Activated CD4-positive, alpha-beta T cell treated with anti-CD3 and anti-CD28 coated beads for 36 hours (primary cell): ENCODE measurements at regions of chr2 and their contacts with region 1.

Region 1: GRCh38 chr2:232315049-232315922 is 63.3 kb upstream of the ALPP start:
- DNase-seq: peak; percentile 86
- ATAC-seq: peak; percentile 90
- H3K4me3 Mint-ChIP-seq: peak overlapping the region; percentile 42
- H3K27ac Mint-ChIP-seq: peak overlapping the region; percentile 97
- H3K4me1 Mint-ChIP-seq: peaks cover 87% of the 10 kb centered on the region
- H3K27me3 Mint-ChIP-seq: no peaks in the 10 kb centered on the region

Region 2: GRCh38 chr2:232026910-232027309 is 288.4 kb before region 1 on chr2:
- CTCF ChIA-PET with region 1: no interaction called
- POLR2A ChIA-PET with region 1: no interaction called
- intact Hi-C with region 1: loop called in 1 of 2 experiments (anchors 5 kb)
- DNase-seq: no peak
- ATAC-seq: peak; percentile 95
- H3K4me3 Mint-ChIP-seq: no peak overlapping the region
- H3K27ac Mint-ChIP-seq: peak overlapping the region; percentile 48
- H3K4me1 Mint-ChIP-seq: peaks cover 29% of the 10 kb centered on the region
- H3K27me3 Mint-ChIP-seq: no peaks in the 10 kb centered on the region

Region 3: DNA sequence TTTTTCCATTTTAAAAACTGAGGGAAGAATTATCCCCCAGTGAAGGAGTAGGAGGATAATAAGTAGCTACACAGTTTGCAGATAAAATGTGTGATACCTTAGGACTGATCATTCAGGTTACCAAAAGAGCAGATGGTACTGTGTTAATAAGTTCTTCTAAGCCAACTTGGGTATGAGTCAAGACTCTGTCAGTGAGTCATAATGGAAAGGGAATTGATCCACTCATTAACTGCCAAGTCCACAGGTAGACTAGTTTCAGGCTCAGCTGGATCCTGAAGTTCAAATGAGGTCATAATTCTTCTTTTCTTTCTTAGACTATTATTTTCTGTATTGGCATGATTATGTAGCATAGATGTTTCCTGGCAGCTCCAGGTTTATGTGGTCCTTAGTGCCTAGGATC is 79.1 kb before region 1 on chr2:
- CTCF ChIA-PET with region 1: interaction called, 5 read pairs
- POLR2A ChIA-PET with region 1: no interaction called
- intact Hi-C with region 1: loop called (anchors 1 to 5 kb)
- DNase-seq: no peak
- ATAC-seq: peak; percentile 69
- H3K4me3 Mint-ChIP-seq: no peak overlapping the region
- H3K27ac Mint-ChIP-seq: peak overlapping the region; percentile 58
- H3K4me1 Mint-ChIP-seq: peaks cover 64% of the 10 kb centered on the region
- H3K27me3 Mint-ChIP-seq: no peaks in the 10 kb centered on the region

Region 4: GRCh38 chr2:232260075-232260474 is 55.2 kb before region 1 on chr2:
- CTCF ChIA-PET with region 1: no interaction called
- POLR2A ChIA-PET with region 1: no interaction called
- intact Hi-C with region 1: no loop called
- DNase-seq: no peak
- ATAC-seq: no peak
- H3K4me3 Mint-ChIP-seq: no peak overlapping the region
- H3K27ac Mint-ChIP-seq: no peak overlapping the region
- H3K4me1 Mint-ChIP-seq: no peaks in the 10 kb centered on the region
- H3K27me3 Mint-ChIP-seq: no peaks in the 10 kb centered on the region

Region 5: DNA sequence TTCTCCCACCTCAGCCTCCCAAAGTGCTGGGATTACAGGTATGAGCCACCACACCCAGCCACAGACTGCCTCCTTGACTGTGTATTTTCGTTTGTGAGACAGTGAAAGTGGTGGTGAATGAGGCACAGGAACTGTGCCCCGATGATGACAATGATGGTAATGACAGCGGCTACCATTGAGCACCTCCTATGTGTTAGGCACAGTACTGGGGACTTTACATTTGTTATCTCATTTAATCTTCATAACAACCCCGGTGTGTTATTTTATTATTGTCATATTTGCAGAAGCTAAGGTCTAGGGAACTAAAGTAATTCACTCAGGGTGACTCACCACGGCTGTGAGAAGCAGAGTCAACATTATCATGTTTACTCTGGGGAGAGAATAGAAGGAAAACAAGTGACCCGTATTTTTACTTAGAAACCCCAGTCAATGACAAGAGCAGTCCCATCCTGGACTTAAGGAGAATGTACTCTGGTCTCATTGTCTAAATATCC is 14.3 kb before region 1 on chr2:
- CTCF ChIA-PET with region 1: interaction called, 17 read pairs
- POLR2A ChIA-PET with region 1: no interaction called
- intact Hi-C with region 1: no loop called
- DNase-seq: no peak
- ATAC-seq: peak; percentile 65
- H3K4me3 Mint-ChIP-seq: no peak overlapping the region
- H3K27ac Mint-ChIP-seq: no peak overlapping the region
- H3K4me1 Mint-ChIP-seq: peaks cover 15% of the 10 kb centered on the region
- H3K27me3 Mint-ChIP-seq: no peaks in the 10 kb centered on the region

Region 6: DNA sequence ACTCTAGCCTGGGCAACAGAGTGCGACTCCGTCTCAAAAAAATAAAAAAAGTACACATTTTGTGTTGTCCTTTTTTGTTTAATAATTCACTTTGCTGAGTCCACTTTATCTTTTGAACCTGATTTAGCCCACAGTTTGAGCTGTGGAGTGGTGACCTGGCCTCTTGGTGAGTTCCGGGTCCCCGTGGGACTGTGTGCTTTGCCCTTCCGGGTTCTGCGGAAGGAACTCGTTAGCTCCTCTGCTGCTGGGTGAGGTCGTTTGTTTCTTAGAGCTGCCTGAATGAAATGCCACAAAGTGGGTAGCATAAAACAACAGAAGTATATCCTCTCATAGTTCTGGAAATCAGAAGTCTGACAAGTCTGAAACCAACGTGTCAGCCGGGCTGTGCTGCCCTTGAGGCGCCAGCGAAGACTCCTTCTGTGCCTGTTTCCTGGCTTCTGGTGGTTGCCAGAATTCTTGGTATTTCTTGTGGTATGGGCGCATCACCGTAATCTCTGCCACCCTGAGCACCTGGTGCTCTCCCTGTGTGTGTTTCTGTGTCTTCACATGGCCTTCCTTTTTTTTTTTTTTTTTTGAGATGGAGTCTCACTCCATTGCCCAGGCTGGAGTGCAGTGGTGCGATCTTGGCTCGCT is 321.6 kb after region 1 on chr2:
- CTCF ChIA-PET with region 1: no interaction called
- POLR2A ChIA-PET with region 1: no interaction called
- intact Hi-C with region 1: no loop called
- DNase-seq: no peak
- ATAC-seq: no peak
- H3K4me3 Mint-ChIP-seq: no peak overlapping the region
- H3K27ac Mint-ChIP-seq: no peak overlapping the region
- H3K4me1 Mint-ChIP-seq: peaks cover 5% of the 10 kb centered on the region
- H3K27me3 Mint-ChIP-seq: peaks cover 37% of the 10 kb centered on the region

Region 7: DNA sequence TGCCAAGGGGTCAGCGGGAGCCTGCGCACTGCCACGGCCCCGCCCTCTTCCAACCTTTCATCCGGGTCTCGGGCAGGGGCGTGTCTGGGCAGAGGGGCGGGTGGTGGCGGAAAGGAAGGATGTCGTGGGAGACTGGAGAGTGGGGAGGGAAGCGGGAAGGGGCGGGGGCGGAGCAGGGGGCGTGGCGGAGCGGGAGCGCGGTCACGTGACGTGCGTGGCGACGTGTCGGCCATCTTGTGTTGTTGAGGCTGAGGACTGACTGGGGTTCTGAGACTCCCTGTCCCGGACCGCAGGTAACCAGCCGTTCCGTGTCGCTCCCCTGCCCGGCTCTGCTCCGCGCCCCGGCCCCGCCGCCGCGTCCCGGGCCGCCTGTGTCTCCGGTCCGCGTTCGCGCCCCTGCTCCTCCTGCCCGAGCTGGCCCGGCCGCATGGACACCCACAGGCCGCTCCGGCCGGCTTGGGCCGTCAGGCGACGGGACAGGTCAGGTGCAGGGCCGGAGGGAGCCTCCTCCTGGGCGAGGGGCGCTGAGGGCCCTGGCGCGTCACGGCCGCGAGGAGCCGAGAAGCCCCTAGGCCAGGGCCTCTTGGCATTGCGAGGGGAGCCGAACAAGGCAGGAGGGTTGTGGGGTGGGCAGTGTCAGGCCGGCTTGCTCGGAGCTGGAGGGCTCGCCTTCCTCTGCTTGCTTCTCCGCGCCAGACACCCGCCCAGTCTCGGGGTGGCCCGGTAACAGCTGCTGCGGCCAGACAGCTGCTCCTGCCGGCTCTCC is 382.0 kb after region 1 on chr2 and contains the start of gene GIGYF2:
- CTCF ChIA-PET with region 1: no interaction called
- POLR2A ChIA-PET with region 1: no interaction called
- intact Hi-C with region 1: loop called in 1 of 2 experiments (anchors 10 kb)
- DNase-seq: peak; percentile 98
- ATAC-seq: peak; percentile 92
- H3K4me3 Mint-ChIP-seq: peak within 1 kb of the TSS; percentile 99
- H3K27ac Mint-ChIP-seq: peak within 1 kb of the TSS; percentile 87
- H3K4me1 Mint-ChIP-seq: peaks cover 36% of the 10 kb centered on the region
- H3K27me3 Mint-ChIP-seq: no peaks in the 10 kb centered on the region
- total RNA-seq, gene GIGYF2: 51.1 to 51.9 TPM